ENCODE measurements at regions of chr1 and their contacts with region 1.

Region 1: DNA sequence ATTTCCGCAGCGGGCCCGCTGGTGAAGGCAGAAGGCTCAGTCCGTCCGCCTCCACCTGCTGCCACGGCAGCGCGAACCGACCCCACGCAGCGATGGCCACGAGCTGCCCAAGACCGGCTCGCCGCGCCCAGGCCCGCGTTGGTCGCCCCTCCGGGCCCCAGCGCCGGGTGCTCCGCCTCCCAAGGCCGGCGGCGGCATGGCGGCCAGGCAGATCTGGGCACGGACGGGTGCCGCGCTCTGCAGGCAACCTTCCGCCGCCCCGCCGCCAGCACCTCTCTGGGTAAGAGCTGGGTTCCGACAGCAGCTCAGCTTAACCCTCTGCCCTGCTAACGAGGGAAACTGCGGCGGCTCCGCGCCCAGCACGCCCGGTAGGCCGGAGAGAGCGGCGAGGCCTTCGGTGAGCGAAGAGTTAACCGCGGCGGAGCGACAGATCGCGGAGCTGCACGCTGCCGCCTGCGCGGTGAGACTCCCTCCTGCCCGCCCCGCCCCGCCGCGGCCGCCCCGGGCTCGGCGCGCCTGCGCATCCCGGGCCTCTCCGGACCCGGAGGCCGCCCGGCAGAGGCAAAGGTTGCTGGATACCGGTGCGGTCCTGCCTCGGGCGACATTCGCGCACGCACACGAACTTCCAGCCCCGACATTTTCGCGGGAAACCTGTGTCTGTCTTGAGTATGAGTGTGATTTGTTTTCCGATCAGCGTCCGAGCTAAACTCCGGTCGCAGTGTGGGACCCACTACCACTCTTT is at the start of gene C1orf53:
- DNase-seq: peak in 1 of 2 donors; percentile 88
- H3K4me3 ChIP-seq: peak within 1 kb of the TSS; percentile 82 to 92
- H3K27ac ChIP-seq: peak within 1 kb of the TSS; percentile 44 to 55
- H3K4me1 ChIP-seq: peaks cover 0 to 3% of the 10 kb centered on the region in 2 donors
- H3K27me3 ChIP-seq: no peaks in the 10 kb centered on the region
- CTCF ChIP-seq: no peak
- total RNA-seq, gene C1orf53: not detected

Region 2: GRCh38 chr1:197775282-197776262 is 127.1 kb before region 1 on chr1 and contains the start of gene DENND1B:
- intact Hi-C with region 1: loop called (anchors 5 kb)
- DNase-seq: peak; percentile 23 to 84
- H3K4me3 ChIP-seq: peak within 1 kb of the TSS; percentile 89 to 99
- H3K27ac ChIP-seq: peak within 1 kb of the TSS; percentile 74 to 96
- H3K4me1 ChIP-seq: peaks cover 0 to 9% of the 10 kb centered on the region in 2 donors
- H3K27me3 ChIP-seq: no peaks in the 10 kb centered on the region
- CTCF ChIP-seq: peak in 1 of 3 experiments; percentile 17
- total RNA-seq, gene DENND1B: 12.2 TPM

Region 3: DNA sequence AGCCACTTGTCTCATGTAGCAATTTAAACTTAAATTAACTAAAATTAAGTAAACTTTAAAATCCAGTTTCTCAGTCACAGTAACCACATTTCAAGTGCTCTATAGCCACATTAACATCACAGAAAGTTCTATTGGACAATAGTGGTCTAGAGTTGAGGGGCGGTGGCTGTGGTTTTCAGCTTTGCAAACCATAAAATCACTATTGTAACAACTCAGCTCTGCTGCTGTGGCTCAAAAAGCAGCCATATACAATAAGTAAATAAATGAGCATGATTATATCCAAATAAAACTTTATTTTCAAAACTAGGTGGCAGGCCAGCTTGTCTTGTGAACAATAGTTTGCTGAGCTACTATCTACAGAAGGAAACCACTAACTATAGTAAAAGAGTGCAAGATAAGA is 43.6 kb before region 1 on chr1:
- intact Hi-C with region 1: no loop called
- DNase-seq: no peak
- H3K4me3 ChIP-seq: no peak overlapping the region
- H3K27ac ChIP-seq: no peak overlapping the region
- H3K4me1 ChIP-seq: no peaks in the 10 kb centered on the region
- H3K27me3 ChIP-seq: no peaks in the 10 kb centered on the region
- CTCF ChIP-seq: no peak

Region 4: DNA sequence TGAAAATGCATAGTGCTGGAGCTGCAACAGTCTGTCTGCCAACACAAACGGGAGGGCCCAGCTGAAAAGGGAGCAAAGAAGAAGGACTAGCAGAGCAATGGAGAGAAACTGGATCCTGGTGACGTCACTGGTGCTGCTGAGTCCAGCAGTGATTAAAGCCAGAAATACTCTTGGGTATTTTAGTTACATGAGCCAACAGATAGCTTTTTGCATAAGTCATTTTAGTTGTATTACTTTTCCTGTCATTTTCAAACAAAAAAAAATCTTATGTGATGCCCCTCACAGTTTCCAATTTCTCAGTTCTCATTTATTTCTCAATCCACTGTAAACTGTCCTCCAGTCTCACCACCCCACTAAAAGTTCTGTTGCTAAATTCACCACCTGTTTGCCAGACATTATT is 215.5 kb after region 1 on chr1:
- intact Hi-C with region 1: loop called (anchors 10 kb)
- DNase-seq: peak in 1 of 2 donors; percentile 91
- H3K4me3 ChIP-seq: no peak overlapping the region
- H3K27ac ChIP-seq: peak overlapping the region; percentile 61 to 83
- H3K4me1 ChIP-seq: peaks cover 0 to 26% of the 10 kb centered on the region in 2 donors
- H3K27me3 ChIP-seq: no peaks in the 10 kb centered on the region
- CTCF ChIP-seq: no peak

Measured in ascending aorta (tissue), 2 donors.